CD14-positive monocyte (primary cell): ENCODE measurements at regions of chr18 and their contacts with region 1.

Region 1: DNA sequence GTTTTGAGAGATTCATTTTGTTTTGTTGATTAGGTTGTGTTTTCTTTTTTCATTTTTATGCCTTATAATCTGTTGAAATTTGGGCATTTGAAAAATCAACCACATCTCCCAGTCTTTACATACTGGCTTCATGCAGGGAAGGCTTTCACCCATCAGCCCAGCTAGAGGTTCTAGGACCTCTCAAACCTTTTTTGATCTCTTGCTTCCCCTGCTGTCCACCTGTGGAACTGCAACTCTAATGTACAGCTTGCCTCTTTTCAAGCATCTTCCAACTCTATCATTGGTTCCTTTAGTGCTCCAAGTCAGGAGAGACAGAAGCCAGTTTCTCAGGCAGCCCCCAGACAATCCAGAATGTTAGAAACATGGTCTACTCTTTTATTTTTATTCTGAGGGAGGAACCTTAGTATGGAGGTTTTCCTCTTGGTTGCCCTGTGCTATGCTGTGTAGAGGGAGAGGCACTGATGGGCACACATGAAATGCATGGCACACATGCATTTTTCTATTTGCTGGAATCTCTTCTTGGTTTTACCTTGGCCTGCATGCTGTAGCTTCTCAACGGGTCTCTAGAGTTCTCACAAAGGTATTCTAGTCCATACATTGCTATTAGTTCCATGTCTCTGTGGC is 107.2 kb upstream of the L3MBTL4 start:
- DNase-seq: peak; percentile 1 to 7 (median 4)
- H3K4me3 ChIP-seq: no peak overlapping the region
- H3K4me3 Mint-ChIP-seq: no peak overlapping the region
- H3K27ac ChIP-seq: no peak overlapping the region
- H3K27ac Mint-ChIP-seq: no peak overlapping the region
- H3K4me1 ChIP-seq: no peaks in the 10 kb centered on the region
- H3K4me1 Mint-ChIP-seq: no peaks in the 10 kb centered on the region
- H3K27me3 ChIP-seq: no peaks in the 10 kb centered on the region
- H3K27me3 Mint-ChIP-seq: peaks cover 0 to 4% (median 1%) of the 10 kb centered on the region in 3 donors
- CTCF ChIP-seq: peak; percentile 79

Region 2: DNA sequence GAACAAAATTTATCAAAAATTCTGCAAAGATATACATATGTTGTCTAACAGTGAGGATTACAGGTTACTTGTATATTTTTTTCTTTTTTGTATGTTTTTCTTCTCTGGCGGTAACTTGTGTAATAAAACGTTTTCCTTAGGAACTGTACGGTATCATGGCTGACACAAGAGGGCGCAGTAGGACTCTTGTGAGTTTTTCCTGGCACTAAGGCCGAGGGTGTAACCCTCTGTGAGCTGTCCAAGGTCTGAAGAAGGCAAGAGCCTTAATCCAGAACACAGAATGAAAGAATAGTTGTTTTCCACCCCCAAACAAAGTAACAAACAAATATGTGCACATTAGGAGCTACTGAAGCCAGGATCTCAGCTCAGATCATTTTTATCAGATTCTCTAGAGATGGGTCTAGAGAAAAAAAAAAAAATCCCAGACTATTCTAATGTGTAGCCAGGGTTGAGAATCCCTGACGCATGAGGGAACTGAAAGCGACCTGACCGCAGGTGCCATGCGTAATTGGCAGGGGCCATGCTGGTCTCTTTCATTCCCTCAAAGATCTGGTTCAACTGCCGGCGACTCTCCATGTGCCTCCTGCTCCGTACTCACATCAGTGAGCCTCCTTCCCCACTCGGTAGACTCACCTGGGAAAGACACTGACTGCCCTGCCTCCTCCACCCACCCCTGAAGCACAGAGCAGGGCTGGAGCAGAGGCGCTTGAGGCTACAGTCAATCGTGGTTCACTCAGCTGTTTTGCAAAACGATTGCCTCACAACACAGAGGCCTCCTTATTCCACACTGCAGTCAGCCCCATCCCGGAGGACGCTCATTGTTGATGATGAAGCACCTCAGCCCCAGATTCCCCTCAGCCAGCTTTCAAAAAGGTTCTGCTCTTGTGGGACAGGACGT is 653.4 kb before region 1 on chr18:
- intact Hi-C with region 1: loop called in 1 of 2 experiments (anchors 5 kb)
- DNase-seq: peak; percentile 11 to 20 (median 15)
- H3K4me3 ChIP-seq: no peak overlapping the region
- H3K4me3 Mint-ChIP-seq: no peak overlapping the region
- H3K27ac ChIP-seq: no peak overlapping the region
- H3K27ac Mint-ChIP-seq: peak overlapping the region in 1 of 7 donors; percentile 46
- H3K4me1 ChIP-seq: no peaks in the 10 kb centered on the region
- H3K4me1 Mint-ChIP-seq: no peaks in the 10 kb centered on the region
- H3K27me3 ChIP-seq: no peaks in the 10 kb centered on the region
- H3K27me3 Mint-ChIP-seq: peaks cover 2 to 4% (median 3%) of the 10 kb centered on the region in 3 donors
- CTCF ChIP-seq: peak; percentile 67

Region 3: DNA sequence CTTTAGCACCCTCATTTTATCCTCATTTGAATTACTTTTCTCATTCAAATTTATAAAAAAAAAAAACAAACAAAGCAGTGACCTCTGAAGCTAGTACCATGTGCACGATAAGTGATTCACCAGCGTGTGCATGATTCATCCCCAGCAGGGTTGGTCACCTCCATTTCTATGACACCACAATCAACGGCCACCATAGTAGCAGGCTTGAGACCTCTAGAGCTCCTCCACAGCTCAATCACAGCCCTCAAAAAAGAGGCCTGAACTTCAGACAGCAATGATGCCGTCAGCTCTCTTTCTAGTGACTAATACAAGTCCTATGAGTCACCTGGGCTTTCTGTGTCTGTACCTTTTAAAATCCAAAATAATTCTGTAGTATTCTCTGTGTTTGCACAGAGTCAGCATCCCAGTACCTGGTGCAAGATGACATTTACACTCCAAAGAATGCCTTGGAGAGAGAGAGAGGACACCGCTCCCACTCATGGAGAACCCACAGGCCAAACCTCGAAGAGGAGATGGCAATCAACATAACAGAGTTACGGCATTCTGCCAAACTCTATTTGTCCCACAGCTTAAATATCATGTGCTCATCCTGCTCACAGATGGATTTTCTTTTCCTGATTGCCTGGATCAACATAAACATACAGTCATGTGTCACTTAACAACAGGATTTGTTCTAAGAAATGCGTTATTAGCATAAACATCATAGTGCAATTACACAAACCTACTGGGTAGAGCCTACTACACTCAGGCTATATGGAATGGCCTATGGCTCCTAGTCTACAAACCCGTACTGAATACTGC is 165.9 kb before region 1 on chr18:
- intact Hi-C with region 1: no loop called
- DNase-seq: peak in 2 of 3 donors; percentile 0 to 7
- H3K4me3 ChIP-seq: no peak overlapping the region
- H3K4me3 Mint-ChIP-seq: no peak overlapping the region
- H3K27ac ChIP-seq: no peak overlapping the region
- H3K27ac Mint-ChIP-seq: no peak overlapping the region
- H3K4me1 ChIP-seq: no peaks in the 10 kb centered on the region
- H3K4me1 Mint-ChIP-seq: peaks cover 3% of the 10 kb centered on the region
- H3K27me3 ChIP-seq: no peaks in the 10 kb centered on the region
- H3K27me3 Mint-ChIP-seq: no peaks in the 10 kb centered on the region
- CTCF ChIP-seq: no peak